ENCODE measurements at regions of chr13 and their contacts with region 1.

Region 1: GRCh38 chr13:49996951-49997895 is at the start of gene TRIM13:
- DNase-seq: peak in 1 of 2 donors; percentile 96
- H3K4me3 ChIP-seq: peak within 1 kb of the TSS; percentile 65 to 88
- H3K27ac ChIP-seq: peak within 1 kb of the TSS; percentile 92
- H3K4me1 ChIP-seq: peaks cover 47% of the 10 kb centered on the region
- H3K27me3 ChIP-seq: no peaks in the 10 kb centered on the region
- CTCF ChIP-seq: peak in 2 of 3 experiments; percentile 51 to 69
- POLR2A ChIP-seq: peak in 1 of 2 donors; percentile 71
- total RNA-seq, gene TRIM13: 12.3 TPM

Region 2: GRCh38 chr13:50123862-50124536 is 126.8 kb after region 1 on chr13:
- intact Hi-C with region 1: loop called (anchors 2 kb)
- DNase-seq: peak in 1 of 2 donors; percentile 98
- H3K4me3 ChIP-seq: peak overlapping the region; percentile 93 to 95
- H3K27ac ChIP-seq: peak overlapping the region; percentile 98
- H3K4me1 ChIP-seq: peaks cover 34% of the 10 kb centered on the region
- H3K27me3 ChIP-seq: no peaks in the 10 kb centered on the region
- CTCF ChIP-seq: no peak
- POLR2A ChIP-seq: peak; percentile 25 to 81

Region 3: DNA sequence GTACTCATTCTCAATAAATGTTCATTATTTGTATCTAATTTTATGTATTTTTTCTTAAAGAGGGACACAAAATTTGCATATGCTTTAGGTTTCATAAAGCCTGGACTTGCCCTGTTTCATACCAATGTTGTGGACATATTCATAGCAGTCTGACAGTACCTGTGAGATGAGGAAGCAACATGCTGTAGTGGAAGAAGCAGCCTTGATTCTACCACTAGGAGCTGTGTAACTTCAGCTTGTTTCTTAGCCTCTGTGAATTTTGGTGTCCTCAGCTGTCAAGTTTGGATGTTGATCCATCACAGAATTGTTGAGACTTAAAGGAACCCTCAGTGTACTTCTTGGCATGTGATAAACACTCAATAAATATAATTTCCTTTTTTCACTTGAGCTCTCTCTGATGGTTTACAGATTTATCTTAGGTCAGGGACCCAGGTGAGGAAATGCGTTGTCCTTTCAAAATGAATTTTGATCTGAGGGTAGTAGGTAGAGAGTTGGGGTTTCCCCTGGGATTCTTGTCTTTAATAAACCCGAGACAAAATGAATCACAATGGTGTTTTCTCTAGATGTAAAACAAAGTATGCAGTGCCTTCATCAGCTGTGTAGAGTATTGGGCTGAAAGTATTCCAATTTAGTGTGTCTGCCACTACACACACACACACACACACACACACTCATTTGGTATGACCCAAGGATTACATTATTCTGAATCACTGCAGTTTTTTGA is 170.2 kb after region 1 on chr13:
- intact Hi-C with region 1: no loop called
- DNase-seq: no peak
- H3K4me3 ChIP-seq: no peak overlapping the region
- H3K27ac ChIP-seq: no peak overlapping the region
- H3K4me1 ChIP-seq: no peaks in the 10 kb centered on the region
- H3K27me3 ChIP-seq: no peaks in the 10 kb centered on the region
- CTCF ChIP-seq: no peak
- POLR2A ChIP-seq: no peak